ENCODE measurements at regions of chr7 and their contacts with region 1.

Region 1: GRCh38 chr7:103593691-103594090 is 147.7 kb upstream of the SLC26A5 start:
- DNase-seq: peak; percentile 63
- ATAC-seq: peak; percentile 70
- H3K4me3 ChIP-seq: peak overlapping the region; percentile 29; the same call in 1 of the 2 replicates
- H3K27ac ChIP-seq: peak overlapping the region; percentile 60
- H3K4me1 ChIP-seq: peaks cover 34% of the 10 kb centered on the region
- H3K27me3 ChIP-seq: no peaks in the 10 kb centered on the region
- CTCF ChIP-seq: no peak

Region 2: DNA sequence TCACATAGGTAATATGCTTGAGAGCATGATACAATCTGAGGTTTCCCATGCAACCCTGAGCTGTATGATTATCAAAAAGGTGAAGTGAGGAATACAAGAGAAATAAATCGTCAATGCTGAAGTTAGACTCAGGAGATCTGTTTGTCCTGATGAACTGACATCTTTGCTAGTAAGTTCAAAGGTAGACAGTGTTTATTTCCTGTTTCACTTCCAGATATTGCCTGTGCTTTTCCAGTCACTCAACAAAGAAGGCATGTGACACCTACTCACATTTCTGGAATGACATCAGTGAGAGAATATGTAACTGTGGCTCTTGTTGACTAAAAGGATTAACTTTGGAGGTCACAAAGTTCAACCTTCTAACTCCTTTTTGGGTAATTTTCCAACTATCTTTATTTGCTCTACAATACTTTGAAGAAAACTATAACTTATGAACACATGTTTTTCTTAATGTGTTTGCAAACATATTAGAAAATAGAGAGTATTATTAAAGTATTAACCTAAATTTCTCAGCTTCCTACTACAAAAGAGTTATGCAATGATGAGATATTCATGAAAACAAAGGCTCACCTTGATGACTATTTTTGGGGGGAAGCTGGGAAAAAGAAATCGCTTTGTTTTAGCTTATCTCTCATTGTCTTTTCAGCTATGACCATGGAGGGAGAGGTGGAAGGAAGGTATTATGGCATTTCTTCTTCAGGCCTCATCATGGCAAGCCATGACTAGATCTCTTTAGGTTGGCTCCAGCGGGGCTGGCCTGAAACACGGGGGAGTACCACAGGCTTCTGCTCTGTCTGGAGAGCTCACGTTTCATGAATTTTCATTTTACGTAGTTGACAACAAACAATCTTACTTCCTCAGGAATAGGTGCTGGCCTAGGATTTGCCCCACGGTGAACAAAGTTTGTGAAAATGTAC is 67.0 kb after region 1 on chr7:
- CTCF ChIA-PET with region 1: no interaction called
- POLR2A ChIA-PET with region 1: no interaction called
- intact Hi-C with region 1: loop called (anchors 2 kb)
- DNase-seq: peak; percentile 83
- ATAC-seq: peak; percentile 80
- H3K4me3 ChIP-seq: no peak overlapping the region
- H3K27ac ChIP-seq: peak overlapping the region; percentile 56
- H3K4me1 ChIP-seq: peaks cover 15% of the 10 kb centered on the region
- H3K27me3 ChIP-seq: no peaks in the 10 kb centered on the region
- CTCF ChIP-seq: no peak

Region 3: DNA sequence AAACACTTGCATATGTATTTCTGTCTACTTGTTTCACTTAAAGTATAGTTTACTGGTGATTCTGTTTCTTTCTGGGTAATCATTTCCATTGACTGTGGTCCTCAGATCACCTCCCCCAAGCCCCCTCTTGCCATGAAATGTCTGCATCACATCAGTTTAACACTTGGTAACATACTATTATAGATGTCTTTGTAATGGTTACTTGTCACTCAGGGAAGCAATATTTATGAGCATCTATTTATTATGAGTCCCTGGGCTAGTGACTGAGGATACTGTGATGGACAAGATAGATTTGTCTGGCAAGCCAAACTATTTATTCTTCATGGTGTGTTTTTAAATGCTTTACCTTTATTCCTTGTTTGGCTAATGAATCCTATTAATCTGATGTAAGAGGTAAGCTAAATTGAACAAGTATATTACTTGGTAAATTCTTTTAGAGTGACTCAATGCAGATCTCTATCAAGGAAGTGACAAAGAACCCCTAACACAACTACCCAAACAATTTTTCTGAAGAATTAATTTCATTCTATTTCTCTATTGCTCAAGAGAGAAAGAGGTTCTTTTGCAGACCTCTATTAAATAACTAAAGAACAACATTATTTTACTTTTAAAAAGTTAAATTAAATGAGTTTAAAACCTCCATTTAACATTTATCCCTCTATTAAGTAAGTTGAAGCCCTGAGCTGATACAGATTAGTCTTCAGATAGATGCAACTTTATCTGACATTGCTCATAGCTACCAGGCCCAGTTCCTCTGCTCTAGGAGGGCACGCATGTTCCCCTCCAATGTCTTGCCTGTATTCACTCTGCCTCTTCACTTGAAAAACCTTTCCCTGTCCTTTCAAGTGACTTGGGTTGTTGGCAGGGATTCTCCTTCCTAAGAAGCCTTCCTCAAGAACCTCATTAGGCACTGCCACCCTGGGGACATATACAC is 125.1 kb after region 1 on chr7:
- CTCF ChIA-PET with region 1: no interaction called
- POLR2A ChIA-PET with region 1: no interaction called
- intact Hi-C with region 1: loop called (anchors 1 kb)
- DNase-seq: peak; percentile 75
- ATAC-seq: peak; percentile 88
- H3K4me3 ChIP-seq: no peak overlapping the region
- H3K27ac ChIP-seq: peak overlapping the region; percentile 79
- H3K4me1 ChIP-seq: peaks cover 25% of the 10 kb centered on the region
- H3K27me3 ChIP-seq: no peaks in the 10 kb centered on the region
- CTCF ChIP-seq: no peak

Region 4: GRCh38 chr7:103752997-103753396 is 159.3 kb after region 1 on chr7:
- CTCF ChIA-PET with region 1: no interaction called
- POLR2A ChIA-PET with region 1: no interaction called
- intact Hi-C with region 1: loop called (anchors 5 kb)
- DNase-seq: peak; percentile 69
- ATAC-seq: peak; percentile 90
- H3K4me3 ChIP-seq: no peak overlapping the region
- H3K27ac ChIP-seq: no peak overlapping the region
- H3K4me1 ChIP-seq: peaks cover 3% of the 10 kb centered on the region; the same call in 1 of the 2 replicates
- H3K27me3 ChIP-seq: no peaks in the 10 kb centered on the region
- CTCF ChIP-seq: peak; percentile 65

Region 5: DNA sequence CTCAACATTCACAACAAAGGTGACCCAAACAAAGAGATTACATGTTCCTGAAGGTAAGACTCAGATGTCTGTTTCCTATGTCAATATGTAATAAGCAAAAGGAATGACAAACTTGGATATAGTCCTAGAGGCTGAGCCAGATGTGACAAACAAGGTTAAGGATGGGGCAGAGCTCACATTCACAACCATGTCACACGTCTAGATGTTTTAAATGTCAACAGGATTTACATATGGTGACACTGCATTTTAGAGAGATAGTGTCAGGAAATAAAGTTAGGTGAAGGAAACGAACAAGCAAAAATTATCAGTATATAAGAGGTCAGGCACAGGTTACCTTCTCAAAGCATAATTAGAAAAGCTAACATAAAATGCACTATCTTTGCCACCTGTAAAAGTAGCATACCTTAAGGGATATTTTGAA is 387.3 kb after region 1 on chr7:
- CTCF ChIA-PET with region 1: no interaction called
- POLR2A ChIA-PET with region 1: no interaction called
- intact Hi-C with region 1: loop called (anchors 5 kb)
- DNase-seq: no peak
- ATAC-seq: peak; percentile 40; the same call in 1 of the 2 replicates
- H3K4me3 ChIP-seq: no peak overlapping the region
- H3K27ac ChIP-seq: no peak overlapping the region
- H3K4me1 ChIP-seq: no peaks in the 10 kb centered on the region
- H3K27me3 ChIP-seq: peaks cover 33% of the 10 kb centered on the region; the same call in 1 of the 2 replicates
- CTCF ChIP-seq: no peak